AG04449 (cell line): ENCODE measurements at regions of chr6 and their contacts with region 1.

Region 1: GRCh38 chr6:136792410-136793262 is at the start of gene MAP3K5:
- DNase-seq: no peak
- H3K4me3 ChIP-seq: peak within 1 kb of the TSS; percentile 86
- CTCF ChIP-seq: peak; percentile 98

Region 2: DNA sequence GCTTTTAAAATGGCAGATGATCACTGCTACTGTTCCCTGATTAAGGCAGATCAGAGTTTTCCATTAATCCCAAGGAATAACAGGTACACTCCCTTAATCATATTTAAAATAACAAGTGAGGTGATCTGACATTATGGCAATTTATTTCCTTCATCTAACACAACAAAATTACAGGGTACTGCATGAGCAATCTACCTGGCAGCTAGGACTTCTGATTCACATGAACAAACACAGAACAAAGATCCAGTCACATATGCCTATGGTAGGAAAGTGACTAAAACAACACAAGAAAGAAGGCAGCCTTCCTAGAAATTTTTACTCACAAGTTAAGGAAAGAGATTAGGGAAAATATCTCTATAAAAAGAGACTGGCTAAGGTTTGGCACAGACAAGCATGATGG is 275.6 kb before region 1 on chr6:
- CTCF ChIA-PET with region 1: no interaction called
- POLR2A ChIA-PET with region 1: no interaction called
- DNase-seq: no peak
- H3K4me3 ChIP-seq: no peak overlapping the region
- CTCF ChIP-seq: no peak

Region 3: GRCh38 chr6:136550330-136551071 is 242.1 kb before region 1 on chr6 and contains the start of gene MAP7:
- CTCF ChIA-PET with region 1: interaction called, 13 read pairs
- POLR2A ChIA-PET with region 1: no interaction called
- DNase-seq: no peak
- H3K4me3 ChIP-seq: peak within 1 kb of the TSS; percentile 66
- CTCF ChIP-seq: peak; percentile 40

Region 4: DNA sequence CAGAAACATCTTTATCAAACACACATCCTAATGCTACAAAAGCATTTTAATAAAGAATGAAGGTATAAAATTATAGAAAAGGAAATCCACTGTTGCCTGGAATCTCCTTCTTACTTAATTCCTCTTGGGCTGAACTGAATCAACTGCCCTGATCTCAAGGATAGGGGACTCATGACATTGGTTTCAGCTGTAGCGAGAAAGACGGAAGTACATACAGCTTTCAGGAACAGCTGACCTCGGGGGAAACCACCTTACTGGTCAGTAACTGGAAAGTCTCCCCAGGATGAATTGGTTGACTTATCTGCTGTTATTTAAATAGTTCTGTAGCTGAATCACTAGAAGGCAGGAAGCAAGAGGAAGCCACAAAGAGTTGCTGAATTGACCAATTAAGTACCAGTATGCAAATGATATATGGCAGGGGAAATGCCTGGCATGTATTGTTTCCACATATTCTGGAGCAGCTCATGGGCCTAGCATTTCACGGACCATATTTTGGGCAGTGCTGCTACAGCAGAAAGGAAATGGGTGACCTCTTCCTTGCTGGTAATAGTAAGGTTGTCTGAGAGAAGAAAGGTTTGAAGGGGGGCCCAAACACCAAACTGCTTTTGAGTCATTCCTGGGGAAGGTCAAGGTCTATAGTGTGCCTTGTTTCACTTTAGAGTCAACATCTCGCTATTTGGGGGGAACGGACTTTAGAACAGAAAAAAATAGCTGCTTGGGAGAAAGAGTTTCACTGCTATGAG is 198.7 kb before region 1 on chr6:
- CTCF ChIA-PET with region 1: interaction called, 146 read pairs
- POLR2A ChIA-PET with region 1: interaction called, 11 read pairs
- DNase-seq: peak; percentile 99
- H3K4me3 ChIP-seq: peak overlapping the region; percentile 23
- CTCF ChIP-seq: no peak

Region 5: GRCh38 chr6:136657666-136658065 is 135.0 kb before region 1 on chr6:
- CTCF ChIA-PET with region 1: interaction called, 10 read pairs
- POLR2A ChIA-PET with region 1: no interaction called
- DNase-seq: no peak
- H3K4me3 ChIP-seq: no peak overlapping the region
- CTCF ChIP-seq: no peak

Region 6: GRCh38 chr6:136774352-136775041 is 18.1 kb before region 1 on chr6:
- CTCF ChIA-PET with region 1: interaction called, 11 read pairs
- POLR2A ChIA-PET with region 1: no interaction called
- DNase-seq: no peak
- H3K4me3 ChIP-seq: no peak overlapping the region
- CTCF ChIP-seq: no peak

Region 7: DNA sequence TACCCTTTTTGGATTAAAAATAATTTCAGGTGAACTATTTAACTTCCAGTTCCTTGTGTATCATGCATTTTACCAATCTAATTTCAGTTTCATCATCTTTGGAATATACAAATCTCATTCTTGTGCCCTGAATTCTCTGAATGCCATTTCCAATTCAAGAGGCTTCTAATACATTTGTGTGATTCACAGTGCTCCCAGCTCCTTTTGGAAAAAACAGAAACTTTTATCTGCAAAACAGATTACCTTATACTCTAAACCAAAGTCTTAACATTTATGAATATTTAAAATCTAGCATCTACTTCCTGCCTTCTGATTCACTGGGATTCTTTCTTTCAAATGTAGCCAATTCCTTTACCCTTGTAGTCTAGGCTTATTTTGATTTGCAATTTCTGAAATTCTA is 18.6 kb after region 1 on chr6:
- CTCF ChIA-PET with region 1: interaction called, 10 read pairs
- POLR2A ChIA-PET with region 1: interaction called, 5 read pairs
- DNase-seq: no peak
- H3K4me3 ChIP-seq: no peak overlapping the region
- CTCF ChIP-seq: no peak